Left ventricle myocardium superior (tissue), 1 donor: ENCODE measurements at regions of chr3 and their contacts with region 1.

Region 1: DNA sequence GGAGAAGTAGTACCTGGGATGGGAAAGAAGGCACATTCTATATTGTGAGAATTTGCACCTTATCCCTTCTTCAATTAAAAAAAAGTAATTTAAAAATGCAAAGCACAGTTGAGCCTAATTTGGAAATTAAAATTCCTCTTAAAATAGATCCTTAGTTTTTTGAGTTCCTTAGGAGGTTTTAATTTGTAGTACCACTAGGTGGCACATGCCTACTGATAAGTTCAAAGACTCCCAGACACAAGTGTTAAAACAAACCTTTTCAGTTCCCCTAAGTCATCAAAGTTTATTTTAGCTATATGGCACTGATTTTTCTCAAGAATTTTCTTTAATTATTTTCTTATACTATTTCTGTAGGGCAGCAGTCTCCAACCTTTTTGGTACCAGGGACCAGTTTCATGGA is 127.6 kb upstream of the AZI2 start:
- DNase-seq: no peak
- ATAC-seq: no peak

Region 2: GRCh38 chr3:28308196-28308595 is 168.0 kb before region 1 on chr3:
- intact Hi-C with region 1: no loop called
- DNase-seq: no peak
- ATAC-seq: no peak

Region 3: DNA sequence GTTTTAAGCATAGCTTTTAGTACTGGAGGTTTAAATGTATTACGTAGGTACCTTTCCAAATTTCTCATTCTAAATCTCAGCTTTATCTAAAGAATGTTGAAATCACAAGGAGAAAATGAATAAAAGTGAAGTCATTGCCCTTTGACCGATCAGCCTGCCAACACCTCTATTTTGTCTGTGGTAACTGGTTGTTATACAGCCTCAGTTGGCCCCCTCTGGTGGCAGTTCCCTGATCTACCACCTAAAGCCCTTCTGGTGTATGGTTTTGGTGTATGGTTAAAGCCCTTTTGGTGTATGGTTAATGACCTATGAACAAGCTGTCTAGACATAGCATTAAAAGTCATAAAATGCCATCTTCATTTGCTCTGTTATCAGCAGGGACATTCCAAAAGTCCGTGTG is 250.6 kb after region 1 on chr3:
- intact Hi-C with region 1: loop called (anchors 10 kb)
- DNase-seq: peak; percentile 62
- ATAC-seq: peak; percentile 79